ENCODE measurements at regions of chr12 and their contacts with region 1.

Region 1: GRCh38 chr12:52023182-52023975 is 16.6 kb downstream of the TAMALIN start:
- DNase-seq: peak; percentile 87 to 94 (median 88)
- H3K4me3 ChIP-seq: peak overlapping the region; percentile 36 to 57
- H3K4me3 Mint-ChIP-seq: peak overlapping the region; percentile 85 to 99 (median 92)
- H3K27ac ChIP-seq: peak overlapping the region; percentile 48
- H3K27ac Mint-ChIP-seq: peak overlapping the region; percentile 91 to 99 (median 97)
- H3K4me1 ChIP-seq: peaks cover 42% of the 10 kb centered on the region
- H3K4me1 Mint-ChIP-seq: peaks cover 29 to 56% (median 39%) of the 10 kb centered on the region in 4 donors
- H3K27me3 ChIP-seq: no peaks in the 10 kb centered on the region
- H3K27me3 Mint-ChIP-seq: no peaks in the 10 kb centered on the region

Region 2: DNA sequence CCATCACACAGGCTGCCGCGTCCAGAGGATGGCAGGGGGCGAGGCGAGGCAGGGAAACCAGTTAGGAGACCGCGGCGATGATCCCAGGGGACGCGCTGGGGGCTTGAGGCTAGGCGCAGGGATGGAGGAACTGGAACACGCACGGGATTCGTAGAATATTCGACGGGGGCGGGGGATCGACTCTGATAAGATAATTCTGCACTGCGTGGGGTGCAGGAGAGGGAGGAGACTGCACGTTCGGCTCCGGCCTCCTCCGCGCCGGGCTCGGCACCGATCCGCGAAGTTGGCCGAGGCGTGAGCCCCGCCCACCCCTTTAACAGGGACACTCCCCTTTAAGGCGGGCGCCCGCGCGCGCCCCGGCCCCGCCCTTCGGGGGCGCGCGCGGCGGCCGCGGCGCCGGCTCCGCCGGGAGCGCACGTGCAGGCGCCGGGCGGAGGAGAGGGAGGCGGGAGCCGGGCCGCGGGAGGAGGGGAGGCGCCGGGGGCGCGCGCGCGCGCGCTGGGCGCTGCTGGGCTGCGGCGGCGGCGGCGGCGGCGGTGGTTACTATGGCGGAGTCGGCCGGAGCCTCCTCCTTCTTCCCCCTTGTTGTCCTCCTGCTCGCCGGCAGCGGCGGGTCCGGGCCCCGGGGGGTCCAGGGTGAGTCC is 72.1 kb before region 1 on chr12 and contains the start of gene ACVR1B:
- CTCF ChIA-PET with region 1: interaction called, 11 read pairs
- POLR2A ChIA-PET with region 1: no interaction called
- intact Hi-C with region 1: no loop called
- DNase-seq: peak; percentile 88 to 92 (median 89)
- H3K4me3 ChIP-seq: peak within 1 kb of the TSS; percentile 61 to 83
- H3K4me3 Mint-ChIP-seq: peak within 1 kb of the TSS; percentile 87 to 98 (median 95)
- H3K27ac ChIP-seq: peak within 1 kb of the TSS; percentile 63
- H3K27ac Mint-ChIP-seq: peak within 1 kb of the TSS; percentile 49 to 97 (median 95)
- H3K4me1 ChIP-seq: peaks cover 30% of the 10 kb centered on the region
- H3K4me1 Mint-ChIP-seq: peaks cover 29 to 52% (median 40%) of the 10 kb centered on the region in 4 donors
- H3K27me3 ChIP-seq: no peaks in the 10 kb centered on the region
- H3K27me3 Mint-ChIP-seq: peaks cover 0 to 2% of the 10 kb centered on the region in 2 donors
- total RNA-seq, gene ACVR1B: 10.8 to 12.6 TPM

Region 3: GRCh38 chr12:51980051-51980808 is 43.1 kb before region 1 on chr12:
- CTCF ChIA-PET with region 1: interaction called, 1,048 read pairs
- POLR2A ChIA-PET with region 1: interaction called, 3 read pairs
- intact Hi-C with region 1: loop called (anchors 1 kb)
- DNase-seq: peak; percentile 63 to 72 (median 67)
- H3K4me3 ChIP-seq: no peak overlapping the region
- H3K4me3 Mint-ChIP-seq: peak overlapping the region in 1 of 8 donors; percentile 44
- H3K27ac ChIP-seq: no peak overlapping the region
- H3K27ac Mint-ChIP-seq: peak overlapping the region in 6 of 7 donors; percentile 10 to 75 (median 42)
- H3K4me1 ChIP-seq: peaks cover 17% of the 10 kb centered on the region
- H3K4me1 Mint-ChIP-seq: peaks cover 19 to 35% (median 26%) of the 10 kb centered on the region in 4 donors
- H3K27me3 ChIP-seq: no peaks in the 10 kb centered on the region
- H3K27me3 Mint-ChIP-seq: no peaks in the 10 kb centered on the region

Region 4: DNA sequence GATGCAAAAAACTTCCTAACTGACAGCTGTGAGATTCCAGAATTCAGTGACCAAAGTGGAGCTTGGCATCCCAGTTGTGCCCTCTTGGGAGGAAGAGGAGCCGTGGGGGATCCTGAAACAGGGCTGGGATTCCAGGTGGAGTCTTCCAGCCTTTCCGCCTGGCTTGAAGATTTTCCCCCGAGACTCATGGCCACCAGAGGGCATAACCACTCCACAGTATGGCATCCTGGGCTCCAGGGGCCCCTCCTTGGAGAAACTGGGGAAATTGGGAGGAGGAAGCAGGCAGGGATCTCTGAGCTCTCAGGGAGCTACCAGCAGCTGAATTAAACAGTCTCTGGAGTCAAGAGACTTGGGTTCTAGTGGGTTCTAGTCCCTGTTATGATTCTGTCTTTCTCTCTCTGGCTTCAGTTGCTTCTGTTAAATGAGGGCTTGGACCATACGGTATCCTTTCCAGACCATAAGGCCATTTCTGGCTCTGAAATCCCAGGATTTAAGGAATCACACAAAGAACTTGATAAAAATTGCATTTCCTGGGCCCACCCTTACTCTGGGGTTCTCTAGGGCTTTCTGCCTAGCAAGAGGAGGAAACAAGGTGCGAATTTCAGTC is 19.2 kb before region 1 on chr12:
- CTCF ChIA-PET with region 1: interaction called, 1,048 read pairs
- POLR2A ChIA-PET with region 1: interaction called, 187 read pairs
- intact Hi-C with region 1: loop called (anchors 1 kb)
- DNase-seq: no peak
- H3K4me3 ChIP-seq: no peak overlapping the region
- H3K4me3 Mint-ChIP-seq: no peak overlapping the region
- H3K27ac ChIP-seq: no peak overlapping the region
- H3K27ac Mint-ChIP-seq: peak overlapping the region in 2 of 7 donors; percentile 23 to 27
- H3K4me1 ChIP-seq: peaks cover 24% of the 10 kb centered on the region
- H3K4me1 Mint-ChIP-seq: peaks cover 12 to 35% (median 22%) of the 10 kb centered on the region in 4 donors
- H3K27me3 ChIP-seq: no peaks in the 10 kb centered on the region
- H3K27me3 Mint-ChIP-seq: peaks cover 0 to 2% of the 10 kb centered on the region in 2 donors

Region 5: GRCh38 chr12:52050761-52051541 is 27.6 kb after region 1 on chr12 and contains the start of gene NR4A1:
- CTCF ChIA-PET with region 1: interaction called, 89 read pairs
- POLR2A ChIA-PET with region 1: interaction called, 25 read pairs
- intact Hi-C with region 1: loop called (anchors 1 kb)
- DNase-seq: peak; percentile 98 to 99 (median 99)
- H3K4me3 ChIP-seq: peak within 1 kb of the TSS; percentile 84 to 86
- H3K4me3 Mint-ChIP-seq: peak within 1 kb of the TSS; percentile 87 to 96 (median 92)
- H3K27ac ChIP-seq: peak within 1 kb of the TSS; percentile 95
- H3K27ac Mint-ChIP-seq: peak within 1 kb of the TSS; percentile 98 to 100 (median 99)
- H3K4me1 ChIP-seq: peaks cover 33% of the 10 kb centered on the region
- H3K4me1 Mint-ChIP-seq: peaks cover 18 to 45% (median 31%) of the 10 kb centered on the region in 4 donors
- H3K27me3 ChIP-seq: no peaks in the 10 kb centered on the region
- H3K27me3 Mint-ChIP-seq: no peaks in the 10 kb centered on the region
- total RNA-seq, gene NR4A1: 1.1 to 1.3 TPM

Region 6: DNA sequence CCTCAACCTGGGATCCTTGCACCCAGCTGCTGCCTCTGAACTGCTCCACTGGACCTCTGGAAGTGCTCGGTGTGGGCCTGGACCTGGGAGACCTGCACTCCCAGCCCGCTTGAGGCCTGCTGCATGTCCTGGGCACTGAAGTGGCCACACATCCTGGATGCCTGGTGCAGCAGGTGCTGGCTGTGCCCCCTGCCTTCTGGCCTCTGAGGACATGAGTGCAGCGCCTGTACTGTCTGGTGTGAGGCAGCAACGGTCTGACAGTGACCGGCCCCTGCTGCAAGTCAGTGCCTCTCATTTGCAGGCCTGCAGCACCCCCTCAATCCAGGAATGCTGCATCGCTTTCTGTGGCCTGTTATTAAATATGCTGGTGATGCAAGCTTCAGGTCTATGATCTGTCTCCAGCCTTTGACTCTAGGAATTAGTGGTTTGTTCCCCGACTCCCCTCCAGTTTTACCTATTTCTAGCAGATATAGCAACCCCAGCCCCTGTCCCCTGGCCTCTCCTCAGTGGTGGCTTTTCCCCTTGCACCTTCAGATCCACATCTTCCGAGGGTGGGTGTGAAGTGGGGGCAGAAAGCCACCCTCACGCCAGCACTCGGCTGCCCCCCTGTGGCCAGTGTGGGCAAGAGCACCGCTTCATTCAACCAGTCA is 59.7 kb after region 1 on chr12:
- CTCF ChIA-PET with region 1: interaction called, 434 read pairs
- POLR2A ChIA-PET with region 1: interaction called, 23 read pairs
- intact Hi-C with region 1: loop called (anchors 1 kb)
- DNase-seq: peak; percentile 58 to 71 (median 66)
- H3K4me3 ChIP-seq: no peak overlapping the region
- H3K4me3 Mint-ChIP-seq: peak overlapping the region in 1 of 8 donors; percentile 15
- H3K27ac ChIP-seq: no peak overlapping the region
- H3K27ac Mint-ChIP-seq: peak overlapping the region in 5 of 7 donors; percentile 17 to 79 (median 57)
- H3K4me1 ChIP-seq: peaks cover 8% of the 10 kb centered on the region
- H3K4me1 Mint-ChIP-seq: peaks cover 3 to 11% (median 7%) of the 10 kb centered on the region in 4 donors
- H3K27me3 ChIP-seq: no peaks in the 10 kb centered on the region
- H3K27me3 Mint-ChIP-seq: peaks cover 8 to 13% of the 10 kb centered on the region in 2 donors

Region 7: DNA sequence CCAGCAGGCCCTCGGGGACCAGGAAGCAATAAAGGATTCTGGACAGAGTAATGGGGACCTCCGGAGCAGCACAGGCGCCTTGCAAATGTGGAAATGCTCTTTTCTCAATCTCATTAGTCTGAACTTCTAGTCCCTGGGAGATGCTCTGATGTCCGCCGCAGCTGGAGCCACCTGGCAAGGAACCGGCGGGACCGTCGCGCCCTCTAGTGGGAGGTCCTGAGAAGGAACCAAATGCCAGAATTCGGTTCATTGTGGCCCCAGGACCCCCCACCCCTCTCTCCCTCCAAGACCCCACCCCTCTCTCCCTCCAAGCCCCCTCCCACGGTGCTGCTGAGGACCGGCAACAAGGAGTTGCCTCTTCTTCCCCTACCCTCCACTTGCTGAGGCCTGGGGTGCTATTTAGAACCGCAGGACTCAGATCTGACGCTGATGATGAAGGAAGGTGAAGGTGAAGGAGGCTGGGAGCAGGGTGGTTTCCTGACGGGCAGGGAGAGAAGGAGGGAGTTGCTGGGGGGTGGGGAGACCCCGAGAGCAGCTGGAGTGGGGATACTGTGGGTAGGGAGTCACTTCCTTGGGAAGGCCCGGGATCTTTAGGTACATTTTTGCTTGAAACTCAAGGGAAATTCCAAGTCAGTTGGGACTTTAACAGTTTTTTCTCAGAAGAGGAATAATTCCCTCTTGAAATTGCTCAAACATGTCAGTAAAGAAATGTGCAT is 98.6 kb after region 1 on chr12:
- CTCF ChIA-PET with region 1: interaction called, 41 read pairs
- POLR2A ChIA-PET with region 1: no interaction called
- intact Hi-C with region 1: loop called (anchors 1 kb)
- DNase-seq: peak; percentile 42 to 47 (median 45)
- H3K4me3 ChIP-seq: no peak overlapping the region
- H3K4me3 Mint-ChIP-seq: peak overlapping the region in 1 of 8 donors; percentile 41
- H3K27ac ChIP-seq: no peak overlapping the region
- H3K27ac Mint-ChIP-seq: peak overlapping the region in 2 of 7 donors; percentile 25 to 73
- H3K4me1 ChIP-seq: peaks cover 5% of the 10 kb centered on the region
- H3K4me1 Mint-ChIP-seq: peaks cover 6 to 15% (median 8%) of the 10 kb centered on the region in 4 donors
- H3K27me3 ChIP-seq: no peaks in the 10 kb centered on the region
- H3K27me3 Mint-ChIP-seq: peaks cover 8 to 31% of the 10 kb centered on the region in 2 donors

Measured in CD4-positive, alpha-beta memory T cell (primary cell).